ENCODE measurements at regions of chr4 and their contacts with region 1.

Region 1: GRCh38 chr4:94451695-94452475 is at the start of gene PDLIM5:
- DNase-seq: peak; percentile 96
- H3K4me3 Mint-ChIP-seq: peak within 1 kb of the TSS; percentile 91
- H3K27ac Mint-ChIP-seq: peak within 1 kb of the TSS; percentile 76
- H3K4me1 Mint-ChIP-seq: peaks cover 13% of the 10 kb centered on the region
- H3K27me3 Mint-ChIP-seq: peaks cover 32% of the 10 kb centered on the region
- total RNA-seq, gene PDLIM5: 16.5 and 17.8 TPM in 2 replicates

Region 2: DNA sequence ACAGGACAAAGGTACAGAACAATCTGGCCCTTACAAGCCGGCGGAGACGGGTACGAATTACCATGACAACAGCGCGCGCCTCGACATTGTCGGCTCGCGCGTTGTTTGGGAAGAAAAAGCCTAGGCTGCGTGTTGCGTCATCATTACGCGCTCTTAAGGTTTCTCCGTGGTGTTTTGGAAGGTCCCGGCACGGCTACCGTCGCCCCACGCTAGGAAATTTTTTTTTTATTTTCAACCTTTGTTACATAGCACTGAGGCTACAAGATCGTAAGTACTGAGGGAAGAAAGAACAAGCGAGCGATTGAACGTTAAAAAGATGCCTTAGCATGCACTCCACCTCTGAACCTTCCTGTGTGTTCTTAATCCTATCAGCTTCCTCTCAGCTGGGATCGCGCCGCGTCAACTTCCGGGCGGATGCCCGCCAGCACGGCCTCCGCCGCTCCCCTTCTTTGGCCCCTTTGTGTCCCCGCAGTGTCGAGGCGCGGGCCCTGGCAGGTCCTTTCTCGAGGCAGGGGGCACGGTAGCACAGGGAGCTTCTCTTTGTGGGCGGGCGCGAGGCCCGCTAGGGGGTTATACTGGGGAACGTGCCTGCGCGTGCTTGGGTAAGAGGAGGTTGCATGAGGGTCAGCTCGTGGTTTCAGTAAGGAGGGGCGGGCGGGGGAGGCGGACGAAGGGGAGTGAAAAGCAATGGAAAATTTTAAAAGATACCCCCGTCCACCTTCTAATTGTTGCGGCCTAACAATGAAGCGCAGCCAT is 244.2 kb before region 1 on chr4 and contains the start of gene SMARCAD1:
- intact Hi-C with region 1: loop called (anchors 5 kb)
- DNase-seq: peak; percentile 96
- H3K4me3 Mint-ChIP-seq: peak within 1 kb of the TSS; percentile 96
- H3K27ac Mint-ChIP-seq: peak within 1 kb of the TSS; percentile 98
- H3K4me1 Mint-ChIP-seq: peaks cover 32% of the 10 kb centered on the region
- H3K27me3 Mint-ChIP-seq: peaks cover 3% of the 10 kb centered on the region
- total RNA-seq, gene SMARCAD1: 45.6 and 45.7 TPM in 2 replicates

Region 3: GRCh38 chr4:94349193-94349592 is 102.7 kb before region 1 on chr4:
- intact Hi-C with region 1: loop called (anchors 5 kb)
- DNase-seq: no peak
- H3K4me3 Mint-ChIP-seq: no peak overlapping the region
- H3K27ac Mint-ChIP-seq: peak overlapping the region; percentile 80
- H3K4me1 Mint-ChIP-seq: peaks cover 26% of the 10 kb centered on the region
- H3K27me3 Mint-ChIP-seq: peaks cover 7% of the 10 kb centered on the region

Region 4: GRCh38 chr4:94406668-94407437 is 45.0 kb before region 1 on chr4:
- intact Hi-C with region 1: loop called (anchors 2 kb)
- DNase-seq: peak; percentile 85
- H3K4me3 Mint-ChIP-seq: no peak overlapping the region
- H3K27ac Mint-ChIP-seq: no peak overlapping the region
- H3K4me1 Mint-ChIP-seq: no peaks in the 10 kb centered on the region
- H3K27me3 Mint-ChIP-seq: peaks cover 15% of the 10 kb centered on the region

Region 5: GRCh38 chr4:94497690-94498089 is 45.8 kb after region 1 on chr4:
- intact Hi-C with region 1: loop called (anchors 5 kb)
- DNase-seq: no peak
- H3K4me3 Mint-ChIP-seq: no peak overlapping the region
- H3K27ac Mint-ChIP-seq: no peak overlapping the region
- H3K4me1 Mint-ChIP-seq: no peaks in the 10 kb centered on the region
- H3K27me3 Mint-ChIP-seq: no peaks in the 10 kb centered on the region

Region 6: DNA sequence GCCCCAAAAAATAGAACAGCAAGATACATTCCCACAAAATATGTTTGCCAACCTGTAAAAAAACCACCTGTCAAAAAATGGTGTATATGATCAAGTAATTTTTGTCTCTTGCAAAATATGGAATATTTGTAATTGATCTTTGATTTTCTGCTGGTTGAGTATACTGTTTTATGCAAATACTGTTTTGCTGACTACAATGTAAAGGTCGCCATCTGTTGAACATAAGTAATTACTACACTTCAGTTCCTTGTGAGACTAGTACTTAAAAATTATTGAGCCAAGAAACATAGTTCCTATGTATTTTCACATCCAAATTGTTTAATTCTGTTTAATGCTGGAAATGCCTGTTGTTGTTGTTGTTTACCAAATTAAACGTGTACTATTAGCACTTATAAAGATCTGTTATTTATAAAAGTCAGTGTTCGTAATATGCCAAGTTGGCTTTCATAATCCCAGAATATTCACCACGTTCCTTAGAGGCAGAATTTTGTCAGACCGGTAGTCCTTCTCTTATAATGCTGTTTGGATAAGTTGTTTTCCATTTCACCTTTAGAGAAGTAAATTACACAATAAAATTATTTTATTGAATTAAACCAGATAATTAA is 144.1 kb after region 1 on chr4:
- intact Hi-C with region 1: loop called (anchors 2 kb)
- DNase-seq: no peak
- H3K4me3 Mint-ChIP-seq: no peak overlapping the region
- H3K27ac Mint-ChIP-seq: no peak overlapping the region
- H3K4me1 Mint-ChIP-seq: no peaks in the 10 kb centered on the region
- H3K27me3 Mint-ChIP-seq: no peaks in the 10 kb centered on the region